IMR-90 (cell line): ENCODE measurements at regions of chr3 and their contacts with region 1.

Region 1: GRCh38 chr3:197002701-197003454 is 26.7 kb downstream of the MELTF start:
- DNase-seq: peak; percentile 52
- ATAC-seq: peak; percentile 94
- H3K4me3 ChIP-seq: peak overlapping the region; percentile 74
- H3K27ac ChIP-seq: no peak overlapping the region; the same call in 1 of the 2 replicates
- H3K4me1 ChIP-seq: peaks cover 3% of the 10 kb centered on the region; the same call in 1 of the 2 replicates
- H3K27me3 ChIP-seq: no peaks in the 10 kb centered on the region
- CTCF ChIP-seq: peak; percentile 77
- POLR2A ChIP-seq: no peak
- RAD21 ChIP-seq: peak; percentile 71

Region 2: GRCh38 chr3:196684548-196685407 is 318.1 kb before region 1 on chr3:
- CTCF ChIA-PET with region 1: interaction called, 10 read pairs
- POLR2A ChIA-PET with region 1: no interaction called
- dilution Hi-C with region 1: no loop called
- in situ Hi-C with region 1: no loop called
- intact Hi-C with region 1: no loop called
- DNase-seq: peak; percentile 47
- ATAC-seq: peak; percentile 76
- H3K4me3 ChIP-seq: no peak overlapping the region
- H3K27ac ChIP-seq: no peak overlapping the region
- H3K4me1 ChIP-seq: peaks cover 4% of the 10 kb centered on the region; the same call in 1 of the 2 replicates
- H3K27me3 ChIP-seq: peaks cover 8% of the 10 kb centered on the region
- CTCF ChIP-seq: peak; percentile 88
- POLR2A ChIP-seq: no peak
- RAD21 ChIP-seq: peak; percentile 88

Region 3: GRCh38 chr3:196889844-196890708 is 112.8 kb before region 1 on chr3:
- CTCF ChIA-PET with region 1: no interaction called
- POLR2A ChIA-PET with region 1: no interaction called
- dilution Hi-C with region 1: no loop called
- in situ Hi-C with region 1: no loop called
- intact Hi-C with region 1: no loop called
- DNase-seq: no peak
- ATAC-seq: no peak
- H3K4me3 ChIP-seq: no peak overlapping the region
- H3K27ac ChIP-seq: no peak overlapping the region
- H3K4me1 ChIP-seq: peaks cover 2% of the 10 kb centered on the region; the same call in 1 of the 2 replicates
- H3K27me3 ChIP-seq: no peaks in the 10 kb centered on the region
- CTCF ChIP-seq: no peak
- POLR2A ChIP-seq: no peak
- RAD21 ChIP-seq: no peak

Region 4: DNA sequence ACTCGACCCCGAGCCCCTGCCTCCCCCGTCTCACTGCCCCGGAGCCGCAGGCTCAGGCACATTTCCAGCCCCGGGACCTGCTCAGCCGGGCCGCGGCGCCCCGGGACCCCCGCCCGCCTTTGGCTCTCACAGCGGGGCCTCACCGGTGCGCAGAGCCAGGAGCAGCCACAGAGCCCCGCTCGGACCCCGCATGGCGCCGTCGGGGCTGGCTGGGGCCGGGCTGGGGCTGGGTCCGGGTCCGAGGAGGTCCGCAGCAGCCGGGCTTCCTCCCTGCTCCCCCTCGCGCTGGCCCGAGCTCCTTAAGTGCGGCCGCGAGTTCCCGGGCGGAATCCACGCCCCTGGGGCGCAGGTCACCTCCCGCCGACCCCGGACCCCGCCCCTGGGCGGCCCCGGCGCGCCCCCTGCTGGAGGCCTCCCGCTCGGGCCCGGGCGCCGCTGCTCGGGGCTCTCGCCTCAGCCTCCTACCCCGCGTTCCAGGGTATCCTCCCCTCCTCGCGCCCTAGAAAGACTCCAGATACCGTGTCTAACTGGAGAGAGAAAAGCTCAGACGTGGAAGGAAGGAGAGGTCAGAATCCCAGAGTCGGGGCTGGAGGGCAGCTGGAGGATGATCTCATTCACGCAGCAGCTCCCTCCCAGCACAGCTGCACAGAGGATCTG is 26.8 kb after region 1 on chr3 and contains the start of gene MELTF:
- CTCF ChIA-PET with region 1: no interaction called
- POLR2A ChIA-PET with region 1: no interaction called
- dilution Hi-C with region 1: no loop called
- in situ Hi-C with region 1: no loop called
- intact Hi-C with region 1: loop called (anchors 2 kb)
- DNase-seq: peak; percentile 71
- ATAC-seq: peak; percentile 71
- H3K4me3 ChIP-seq: peak within 1 kb of the TSS; percentile 38
- H3K27ac ChIP-seq: no peak within 1 kb of the TSS
- H3K4me1 ChIP-seq: peaks cover 8% of the 10 kb centered on the region
- H3K27me3 ChIP-seq: peaks cover 18% of the 10 kb centered on the region; the same call in 1 of the 2 replicates
- CTCF ChIP-seq: peak; percentile 65
- POLR2A ChIP-seq: no peak
- RAD21 ChIP-seq: peak; percentile 20; the same call in 1 of the 2 replicates
- total RNA-seq, gene MELTF: 0.18 and 0.28 TPM in 2 replicates

Region 5: DNA sequence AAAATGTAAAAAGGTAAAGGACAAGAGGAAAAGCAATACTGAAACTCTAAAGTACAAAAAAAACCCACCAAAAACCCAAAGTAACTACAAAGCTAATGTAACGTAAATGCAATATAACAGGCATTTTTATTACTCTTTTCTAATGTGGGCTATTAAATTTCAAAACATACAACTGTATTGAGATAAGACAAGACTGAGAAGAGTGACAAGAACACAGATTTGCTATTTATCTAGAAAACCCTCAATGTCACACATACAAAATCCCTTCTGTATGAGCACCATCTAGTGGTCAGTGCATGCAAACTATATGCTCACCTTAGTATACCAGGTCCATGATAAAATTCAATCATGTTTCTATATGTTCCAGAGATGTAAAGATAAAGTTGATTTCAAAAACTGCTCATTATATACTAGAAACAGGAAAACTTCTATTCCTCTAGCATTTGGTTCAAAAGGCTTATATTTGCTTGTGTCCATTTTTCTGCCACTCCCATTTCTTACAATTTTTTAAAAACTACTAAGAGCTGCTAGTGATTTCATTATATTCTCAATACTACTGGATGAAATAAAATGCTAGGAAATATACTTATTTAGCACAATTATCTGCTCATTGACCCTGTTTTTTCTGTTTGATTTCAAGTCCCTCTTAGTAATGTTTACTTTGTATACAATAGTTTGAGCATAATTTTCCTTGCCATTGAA is 184.2 kb after region 1 on chr3:
- CTCF ChIA-PET with region 1: interaction called, 4 read pairs
- POLR2A ChIA-PET with region 1: no interaction called
- dilution Hi-C with region 1: no loop called
- in situ Hi-C with region 1: no loop called
- intact Hi-C with region 1: loop called (anchors 2 kb)
- DNase-seq: peak; percentile 66
- ATAC-seq: peak; percentile 84
- H3K4me3 ChIP-seq: no peak overlapping the region
- H3K27ac ChIP-seq: no peak overlapping the region
- H3K4me1 ChIP-seq: peaks cover 4% of the 10 kb centered on the region
- H3K27me3 ChIP-seq: no peaks in the 10 kb centered on the region
- CTCF ChIP-seq: peak; percentile 82
- POLR2A ChIP-seq: no peak
- RAD21 ChIP-seq: peak; percentile 80

Region 6: DNA sequence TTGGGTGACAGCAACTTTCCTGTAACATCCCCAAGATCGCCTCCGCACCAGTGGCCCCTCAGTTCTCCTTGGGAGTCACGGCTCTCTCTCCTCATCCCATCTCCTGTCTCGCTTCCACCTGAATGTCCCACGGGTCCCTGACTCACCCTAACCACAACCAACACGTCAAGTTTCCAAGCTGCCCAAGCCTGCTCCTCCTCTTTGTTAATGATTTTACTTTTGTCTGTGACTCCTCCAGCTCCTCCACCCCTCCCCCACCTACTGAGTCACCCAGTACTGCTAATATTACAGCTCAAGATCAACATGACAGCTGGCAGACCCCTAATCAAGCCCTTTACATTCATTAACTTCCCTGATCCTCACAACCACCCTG is 513.6 kb after region 1 on chr3:
- CTCF ChIA-PET with region 1: no interaction called
- POLR2A ChIA-PET with region 1: no interaction called
- dilution Hi-C with region 1: no loop called
- in situ Hi-C with region 1: no loop called
- intact Hi-C with region 1: loop called (anchors 10 kb)
- DNase-seq: peak; percentile 94
- ATAC-seq: peak; percentile 71
- H3K4me3 ChIP-seq: no peak overlapping the region
- H3K27ac ChIP-seq: peak overlapping the region; percentile 40; the same call in 1 of the 2 replicates
- H3K4me1 ChIP-seq: peaks cover 11% of the 10 kb centered on the region
- H3K27me3 ChIP-seq: no peaks in the 10 kb centered on the region
- CTCF ChIP-seq: no peak
- POLR2A ChIP-seq: no peak
- RAD21 ChIP-seq: no peak